GM10248 (cell line): ENCODE measurements at regions of chr7 and their contacts with region 1.

Region 1: DNA sequence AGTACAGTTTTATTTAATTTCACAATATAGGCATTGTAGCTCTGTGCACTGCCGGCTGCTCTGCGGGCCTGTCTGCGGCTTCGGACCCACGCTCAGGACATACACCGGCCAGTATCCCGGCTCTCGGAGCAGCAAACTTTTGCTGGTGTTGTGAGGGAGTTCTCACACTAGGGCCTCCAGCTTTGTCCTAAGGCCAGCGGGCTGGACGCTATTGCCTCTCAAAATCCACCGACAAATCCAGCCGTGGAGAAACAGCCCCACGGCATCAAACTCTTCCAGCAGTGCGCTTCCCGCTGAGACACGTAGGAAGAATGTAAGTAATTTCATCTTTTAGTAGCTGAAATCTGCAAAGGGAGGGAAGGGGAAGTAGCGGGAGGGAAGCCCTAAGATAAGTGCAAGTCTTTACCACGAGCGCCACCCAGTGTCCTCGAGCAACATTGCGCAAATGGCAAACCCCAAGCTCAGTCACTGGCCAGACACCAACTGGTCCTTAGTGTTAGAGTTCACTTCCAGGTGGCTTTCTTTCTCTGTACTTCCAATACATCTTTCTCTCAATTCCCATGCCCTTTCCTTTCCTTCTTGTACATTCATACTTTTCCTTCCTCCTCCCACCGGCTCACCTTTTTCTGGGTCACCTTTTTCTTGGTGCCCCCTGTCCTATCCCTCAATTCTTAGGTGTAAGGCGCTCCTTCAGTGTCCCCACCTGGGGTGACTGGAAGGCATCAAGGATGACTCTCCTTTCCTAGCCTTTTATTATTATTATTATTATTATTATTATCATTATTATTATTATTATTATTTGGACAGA is 3.0 kb upstream of the DLX5 start:
- DNase-seq: peak; percentile 79
- CTCF ChIP-seq: peak; percentile 91

Region 2: GRCh38 chr7:95916573-95917297 is 1110.9 kb before region 1 on chr7:
- CTCF ChIA-PET with region 1: interaction called, 51 read pairs
- POLR2A ChIA-PET with region 1: no interaction called
- DNase-seq: peak; percentile 48
- CTCF ChIP-seq: peak; percentile 93

Region 3: GRCh38 chr7:96075510-96076349 is 951.9 kb before region 1 on chr7:
- CTCF ChIA-PET with region 1: interaction called, 44 read pairs
- POLR2A ChIA-PET with region 1: no interaction called
- DNase-seq: peak; percentile 75
- CTCF ChIP-seq: peak; percentile 92

Region 4: GRCh38 chr7:96968981-96969380 is 58.6 kb before region 1 on chr7:
- CTCF ChIA-PET with region 1: no interaction called
- POLR2A ChIA-PET with region 1: no interaction called
- DNase-seq: no peak
- CTCF ChIP-seq: no peak

Region 5: GRCh38 chr7:96998744-96999143 is 28.9 kb before region 1 on chr7:
- CTCF ChIA-PET with region 1: interaction called, 11 read pairs
- POLR2A ChIA-PET with region 1: no interaction called
- DNase-seq: no peak
- CTCF ChIP-seq: no peak

Region 6: GRCh38 chr7:97016381-97017191 is 11.0 kb before region 1 on chr7:
- CTCF ChIA-PET with region 1: interaction called, 23 read pairs
- POLR2A ChIA-PET with region 1: no interaction called
- DNase-seq: no peak
- CTCF ChIP-seq: no peak

Region 7: GRCh38 chr7:97039374-97040065 is 11.9 kb after region 1 on chr7:
- CTCF ChIA-PET with region 1: interaction called, 19 read pairs
- POLR2A ChIA-PET with region 1: no interaction called
- DNase-seq: no peak
- CTCF ChIP-seq: no peak

Region 8: GRCh38 chr7:97104719-97105238 is 77.1 kb after region 1 on chr7:
- CTCF ChIA-PET with region 1: no interaction called
- POLR2A ChIA-PET with region 1: no interaction called
- DNase-seq: peak; percentile 71
- CTCF ChIP-seq: peak; percentile 91